Activated CD4-positive, alpha-beta T cell treated with anti-CD3 and anti-CD28 coated beads for 36 hours (primary cell): ENCODE measurements at regions of chr16 and their contacts with region 1.

Region 1: DNA sequence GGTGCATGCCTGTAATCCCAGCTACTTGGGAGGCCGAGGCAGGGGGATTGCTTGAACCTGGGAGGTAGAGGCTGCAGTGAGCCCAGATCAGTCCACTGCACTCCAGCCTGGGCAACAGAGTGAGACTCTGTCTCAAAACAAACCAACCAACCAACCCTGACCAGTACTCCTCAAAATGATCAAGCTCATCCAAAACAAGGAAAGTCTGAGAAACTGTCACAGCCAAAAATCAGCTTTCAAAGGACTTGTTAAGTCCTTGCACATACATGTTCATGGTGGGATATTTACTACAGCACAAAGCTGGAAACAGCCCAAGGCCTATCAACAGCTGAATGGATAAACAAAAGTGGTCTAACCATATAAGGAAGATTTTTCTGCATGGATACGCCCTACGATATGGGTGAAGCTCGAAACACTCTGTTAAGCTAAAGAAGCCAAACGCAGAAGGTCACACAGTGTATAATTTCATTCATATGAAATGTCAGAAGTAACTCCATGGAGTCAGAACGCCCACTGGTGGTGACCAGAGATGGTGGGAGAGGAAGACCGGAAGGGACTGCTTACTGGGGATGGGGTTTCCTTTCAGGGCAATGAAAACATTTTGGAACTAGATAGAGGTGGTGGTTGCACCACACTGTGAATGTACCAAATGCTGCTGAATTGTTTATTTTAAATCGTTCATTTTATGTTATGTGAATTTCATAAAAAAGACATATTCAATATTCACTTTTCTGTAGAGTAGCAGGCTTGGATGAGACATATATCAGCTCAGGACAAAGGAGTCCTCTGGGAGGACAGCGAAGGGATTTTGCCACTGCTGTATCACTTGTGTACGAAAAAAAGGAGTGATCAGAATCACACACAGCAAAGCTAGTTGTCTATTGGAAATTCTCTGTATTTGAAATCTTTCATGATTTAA is 17.7 kb downstream of the CCL17 start:
- DNase-seq: no peak
- ATAC-seq: no peak
- H3K4me3 Mint-ChIP-seq: no peak overlapping the region
- H3K27ac Mint-ChIP-seq: no peak overlapping the region
- H3K4me1 Mint-ChIP-seq: peaks cover 12% of the 10 kb centered on the region
- H3K27me3 Mint-ChIP-seq: no peaks in the 10 kb centered on the region

Region 2: GRCh38 chr16:57432989-57433388 is 10.7 kb after region 1 on chr16:
- CTCF ChIA-PET with region 1: interaction called, 14 read pairs
- POLR2A ChIA-PET with region 1: no interaction called
- intact Hi-C with region 1: no loop called
- DNase-seq: no peak
- ATAC-seq: no peak
- H3K4me3 Mint-ChIP-seq: no peak overlapping the region
- H3K27ac Mint-ChIP-seq: peak overlapping the region; percentile 49
- H3K4me1 Mint-ChIP-seq: peaks cover 28% of the 10 kb centered on the region
- H3K27me3 Mint-ChIP-seq: no peaks in the 10 kb centered on the region